ENCODE measurements at regions of chr9 and their contacts with region 1.

Region 1: DNA sequence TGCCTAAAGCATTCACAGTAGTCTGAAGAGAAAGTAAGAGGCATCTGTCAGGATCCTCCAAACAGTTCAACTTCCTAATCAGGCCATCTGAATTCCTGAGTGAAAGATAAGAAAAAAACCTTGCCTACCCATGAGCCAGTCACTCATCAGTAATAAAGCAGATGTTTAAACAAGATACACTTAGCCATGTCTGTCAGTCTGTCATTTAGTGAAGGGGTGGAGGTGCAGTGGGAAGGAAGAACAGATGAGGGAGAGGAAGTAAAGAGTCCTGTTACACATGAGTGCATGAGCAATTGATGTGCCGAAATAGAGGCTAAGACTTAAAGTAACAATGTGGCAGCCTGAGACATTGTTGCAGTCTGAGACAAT is 29.9 kb upstream of the DMRTA1 start:
- DNase-seq: no peak
- ATAC-seq: no peak
- H3K4me3 ChIP-seq: no peak overlapping the region
- H3K4me3 Mint-ChIP-seq: no peak overlapping the region
- H3K27ac ChIP-seq: no peak overlapping the region
- H3K27ac Mint-ChIP-seq: no peak overlapping the region
- H3K4me1 ChIP-seq: no peaks in the 10 kb centered on the region
- H3K4me1 Mint-ChIP-seq: no peaks in the 10 kb centered on the region
- H3K27me3 ChIP-seq: no peaks in the 10 kb centered on the region
- H3K27me3 Mint-ChIP-seq: no peaks in the 10 kb centered on the region

Region 2: DNA sequence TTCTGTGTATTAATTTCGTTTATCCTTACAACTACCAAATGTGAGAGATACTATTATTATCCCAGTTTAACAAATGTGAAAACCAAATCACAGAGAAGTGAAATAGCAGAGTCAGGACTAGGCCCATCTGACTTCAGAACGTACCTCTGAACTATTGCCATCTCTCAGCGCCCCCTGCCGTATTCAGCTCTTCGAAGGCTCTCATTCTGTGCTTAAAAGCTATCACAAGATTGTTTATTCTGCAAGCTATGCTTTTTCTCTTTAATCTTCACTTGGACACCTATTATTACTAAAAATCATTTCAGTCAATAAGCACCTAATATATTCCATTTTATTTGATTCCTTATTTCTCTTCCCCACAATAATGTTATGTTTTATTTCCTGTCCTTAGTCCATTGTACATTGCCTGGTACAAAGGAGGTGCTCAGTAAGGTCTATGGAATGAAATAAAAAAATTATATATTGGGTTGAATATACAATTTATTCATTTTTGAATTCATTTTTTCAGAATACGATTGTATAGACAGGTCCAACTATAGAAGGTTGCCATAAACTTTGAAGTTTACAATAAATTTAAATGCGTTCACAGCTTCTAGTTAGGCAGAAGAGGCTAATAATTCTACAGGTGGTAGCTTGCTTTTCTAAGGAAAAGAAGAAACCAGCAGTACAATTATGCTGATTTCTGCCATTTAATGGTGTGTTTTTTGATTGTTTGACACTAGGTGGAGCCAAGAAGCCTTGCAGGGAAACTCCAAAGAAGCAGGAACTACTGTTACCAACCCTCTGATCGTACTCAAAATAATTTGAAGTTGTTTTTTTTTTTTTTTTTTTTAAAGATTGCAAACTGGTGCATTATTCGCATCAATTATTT is 172.3 kb before region 1 on chr9:
- CTCF ChIA-PET with region 1: no interaction called
- POLR2A ChIA-PET with region 1: no interaction called
- intact Hi-C with region 1: no loop called
- DNase-seq: peak in 6 of 9 donors; percentile 5 to 35 (median 16)
- ATAC-seq: peak; percentile 84
- H3K4me3 ChIP-seq: no peak overlapping the region
- H3K4me3 Mint-ChIP-seq: peak overlapping the region in 6 of 10 donors; percentile 6 to 61 (median 38)
- H3K27ac ChIP-seq: no peak overlapping the region
- H3K27ac Mint-ChIP-seq: no peak overlapping the region
- H3K4me1 ChIP-seq: no peaks in the 10 kb centered on the region
- H3K4me1 Mint-ChIP-seq: peaks cover 0 to 20% (median 9%) of the 10 kb centered on the region in 7 donors
- H3K27me3 ChIP-seq: no peaks in the 10 kb centered on the region
- H3K27me3 Mint-ChIP-seq: peaks cover 5 to 55% (median 14%) of the 10 kb centered on the region in 5 donors

Region 3: DNA sequence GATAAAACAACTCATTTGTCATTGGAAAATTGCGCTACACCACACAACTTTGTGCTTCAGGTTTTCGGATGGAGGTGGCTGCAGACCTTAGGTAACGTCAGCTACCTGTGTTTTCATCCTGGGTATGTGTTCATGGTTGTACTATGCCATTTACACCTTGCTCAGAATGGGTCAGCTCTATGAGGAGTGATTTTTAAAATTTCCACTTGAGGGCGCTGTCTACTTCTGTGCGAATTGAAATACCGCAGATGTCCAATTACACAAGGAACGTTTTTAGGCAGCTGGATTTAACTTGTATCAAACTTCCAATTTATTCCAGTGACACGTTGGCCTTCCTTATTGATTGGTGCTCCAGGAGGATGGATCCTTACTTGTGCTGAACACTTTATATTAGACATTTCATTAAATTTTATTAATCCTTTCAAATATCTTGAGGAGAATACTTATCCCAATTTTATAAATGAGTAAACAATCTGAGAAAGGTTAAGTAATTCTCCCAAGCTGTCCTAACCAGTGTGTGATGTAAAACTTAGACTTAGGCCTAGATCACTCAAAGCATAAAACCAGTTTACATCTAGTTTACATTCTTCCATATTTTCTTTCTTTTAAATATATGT is 53.4 kb after region 1 on chr9:
- CTCF ChIA-PET with region 1: no interaction called
- POLR2A ChIA-PET with region 1: no interaction called
- intact Hi-C with region 1: loop called in 1 of 2 experiments (anchors 10 kb)
- DNase-seq: no peak
- ATAC-seq: peak; percentile 56
- H3K4me3 ChIP-seq: no peak overlapping the region
- H3K4me3 Mint-ChIP-seq: no peak overlapping the region
- H3K27ac ChIP-seq: no peak overlapping the region
- H3K27ac Mint-ChIP-seq: no peak overlapping the region
- H3K4me1 ChIP-seq: no peaks in the 10 kb centered on the region
- H3K4me1 Mint-ChIP-seq: no peaks in the 10 kb centered on the region
- H3K27me3 ChIP-seq: no peaks in the 10 kb centered on the region
- H3K27me3 Mint-ChIP-seq: no peaks in the 10 kb centered on the region

Measured in naive thymus-derived CD4-positive, alpha-beta T cell (primary cell).